GM10248 (cell line): ENCODE measurements at regions of chr20 and their contacts with region 1.

Region 1: DNA sequence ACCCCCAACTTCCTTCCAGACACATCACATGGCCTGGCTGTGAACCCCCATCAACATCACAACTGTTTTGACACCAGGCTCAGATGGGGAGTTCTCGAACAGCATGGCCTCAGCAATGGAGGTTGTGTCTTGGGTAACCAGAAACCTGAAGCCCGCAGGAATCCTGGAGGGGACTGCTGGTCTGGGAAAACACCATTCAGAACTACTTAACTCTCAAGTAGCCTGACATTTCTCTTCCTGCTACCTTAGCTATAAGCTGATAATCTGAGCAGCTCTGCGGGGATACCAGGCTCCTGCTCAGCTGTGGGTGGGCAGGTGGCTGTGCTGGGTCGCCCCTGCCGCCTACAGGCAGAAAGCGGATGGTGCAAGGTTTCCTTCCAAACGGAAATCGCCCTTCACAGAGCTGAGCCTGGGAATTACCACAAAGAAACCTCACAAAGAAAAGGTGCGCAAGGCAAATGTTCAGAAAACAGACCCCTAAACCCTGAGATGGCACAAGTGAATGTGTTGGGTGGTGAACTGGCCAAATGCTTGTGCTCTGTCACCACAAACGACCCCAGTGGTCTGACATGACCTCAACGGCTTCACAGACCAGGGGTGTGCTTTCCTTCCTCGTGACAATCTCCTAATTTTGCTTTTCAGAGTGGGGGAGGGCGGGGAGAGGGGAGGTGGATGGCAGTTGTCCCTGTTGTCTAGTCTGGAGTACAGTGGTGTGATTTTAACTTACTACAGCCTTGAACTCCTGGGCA is 29.5 kb downstream of the SNX5 start:
- DNase-seq: peak; percentile 78
- CTCF ChIP-seq: peak; percentile 92

Region 2: DNA sequence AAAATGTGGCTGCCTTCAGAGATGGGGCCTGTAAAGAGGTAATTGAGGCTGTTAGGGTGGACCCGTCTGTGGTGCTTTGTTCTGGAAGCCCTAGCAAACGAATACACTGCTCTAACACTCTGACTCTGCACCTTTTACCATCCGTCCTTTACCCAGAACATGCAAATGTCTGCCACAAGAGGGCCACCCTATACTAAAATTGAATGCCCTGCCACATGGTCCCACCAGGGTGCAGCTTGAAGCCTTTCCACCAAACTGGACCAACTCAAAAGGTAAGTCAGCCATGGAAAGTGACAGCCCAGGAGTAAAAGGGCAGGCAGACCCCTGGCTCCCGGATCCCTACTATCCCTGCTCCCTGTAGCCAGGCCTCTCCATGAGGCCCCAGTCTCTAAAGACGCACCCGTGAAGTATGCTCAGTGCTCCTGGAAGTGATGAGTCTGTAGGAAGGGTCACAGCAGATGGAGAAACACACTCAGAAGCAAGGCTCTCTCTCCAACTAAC is 402.1 kb before region 1 on chr20:
- CTCF ChIA-PET with region 1: interaction called, 11 read pairs
- POLR2A ChIA-PET with region 1: no interaction called
- DNase-seq: peak; percentile 73
- CTCF ChIP-seq: peak; percentile 81

Region 3: DNA sequence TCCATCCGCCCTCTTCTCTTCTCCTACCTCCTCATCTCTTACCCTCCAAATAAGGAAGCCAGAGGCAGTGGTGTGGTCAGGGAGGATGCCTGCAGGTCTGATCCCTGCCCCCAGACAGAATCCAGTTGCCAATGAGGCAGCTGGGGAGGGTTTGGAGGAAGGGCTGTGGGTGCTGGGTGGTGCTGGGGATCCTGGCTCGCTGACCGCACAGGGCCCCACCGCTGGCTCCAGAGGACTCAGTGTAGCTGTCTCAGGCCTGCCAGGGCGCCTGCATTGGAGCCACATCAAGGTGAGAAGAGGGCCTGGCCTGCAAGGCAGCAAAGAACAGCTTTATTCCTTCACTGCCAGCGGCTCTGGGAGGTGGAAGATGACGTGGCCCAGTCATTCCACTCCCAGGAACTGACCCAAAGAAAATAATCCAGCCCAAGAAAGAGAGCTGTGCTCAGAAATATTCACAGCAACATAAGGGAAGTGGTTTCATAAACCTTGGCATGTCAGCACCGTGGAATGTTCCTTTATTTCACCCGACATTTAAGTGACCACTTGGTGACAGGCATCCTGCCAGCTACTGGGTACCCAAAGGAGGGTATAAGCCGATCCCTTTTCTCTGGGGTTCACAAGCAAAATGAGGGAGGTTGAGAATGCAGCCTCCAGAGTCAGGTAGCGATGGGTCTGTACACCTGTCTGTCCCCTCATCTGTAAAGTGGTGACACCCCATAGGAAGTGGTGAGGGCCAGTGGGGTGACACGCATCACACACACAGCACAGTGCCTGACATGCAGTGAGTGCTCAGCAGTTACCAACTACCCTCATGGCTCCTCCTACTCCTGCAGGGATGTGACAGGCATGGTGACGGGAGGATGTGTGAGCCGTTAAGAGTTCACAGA is 95.6 kb before region 1 on chr20:
- CTCF ChIA-PET with region 1: no interaction called
- POLR2A ChIA-PET with region 1: no interaction called
- DNase-seq: no peak
- CTCF ChIP-seq: no peak

Region 4: DNA sequence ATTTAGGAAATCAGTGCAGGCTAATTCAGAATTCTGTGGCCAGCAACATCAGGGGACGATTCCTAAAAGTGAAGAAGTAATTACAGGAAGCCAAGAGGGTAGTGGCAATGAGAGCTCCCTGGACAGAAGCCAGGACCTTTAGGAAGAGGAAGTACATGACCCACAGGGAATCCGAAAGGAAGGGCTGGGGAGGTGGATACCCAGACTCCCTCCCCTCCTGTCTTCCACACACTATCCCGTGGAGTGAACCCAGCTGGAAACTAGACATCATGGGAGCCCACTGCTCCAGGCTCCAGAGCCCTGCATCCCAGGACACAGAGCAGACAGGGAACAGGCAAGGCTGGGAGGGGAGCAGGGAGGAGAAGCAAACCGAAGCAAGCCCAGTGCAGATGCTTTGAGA is 53.5 kb before region 1 on chr20:
- CTCF ChIA-PET with region 1: no interaction called
- POLR2A ChIA-PET with region 1: no interaction called
- DNase-seq: no peak
- CTCF ChIP-seq: no peak

Region 5: GRCh38 chr20:17904027-17904426 is 35.0 kb before region 1 on chr20:
- CTCF ChIA-PET with region 1: interaction called, 13 read pairs
- POLR2A ChIA-PET with region 1: no interaction called
- DNase-seq: peak; percentile 52
- CTCF ChIP-seq: no peak

Region 6: DNA sequence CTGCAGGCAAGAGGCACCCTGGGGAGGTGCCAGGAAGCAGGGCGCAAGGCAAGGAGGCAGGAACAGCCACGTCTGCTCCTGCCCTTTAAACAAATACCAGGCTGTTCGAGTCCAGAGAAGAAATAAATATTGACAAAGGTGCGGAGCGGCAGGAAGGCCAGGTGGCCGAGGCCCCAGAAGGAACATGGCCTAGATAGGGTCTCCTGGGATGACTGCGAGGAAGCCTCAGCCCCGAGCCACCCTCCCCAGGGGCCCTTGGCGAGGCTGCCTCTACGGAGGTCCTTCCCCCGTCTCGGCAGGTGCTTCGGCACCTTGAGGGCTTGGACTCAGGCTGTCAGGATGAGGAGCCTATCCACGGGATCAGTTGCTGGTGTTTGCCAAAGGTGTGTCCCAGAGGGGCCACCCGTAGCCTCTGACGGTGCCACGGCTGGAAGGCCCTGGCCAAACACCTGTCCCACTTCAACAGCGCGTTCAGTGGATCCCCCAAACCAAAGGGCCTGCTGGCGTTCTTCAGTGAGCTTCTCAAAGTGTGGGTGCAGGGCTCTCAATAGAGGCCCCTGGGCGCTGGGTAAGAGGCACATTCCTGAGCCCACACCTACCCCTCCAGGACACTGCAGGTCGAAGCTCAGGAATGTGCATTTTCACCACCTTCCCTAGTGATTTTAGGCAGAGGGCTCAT is 10.3 kb before region 1 on chr20:
- CTCF ChIA-PET with region 1: interaction called, 22 read pairs
- POLR2A ChIA-PET with region 1: no interaction called
- DNase-seq: no peak
- CTCF ChIP-seq: no peak

Region 7: DNA sequence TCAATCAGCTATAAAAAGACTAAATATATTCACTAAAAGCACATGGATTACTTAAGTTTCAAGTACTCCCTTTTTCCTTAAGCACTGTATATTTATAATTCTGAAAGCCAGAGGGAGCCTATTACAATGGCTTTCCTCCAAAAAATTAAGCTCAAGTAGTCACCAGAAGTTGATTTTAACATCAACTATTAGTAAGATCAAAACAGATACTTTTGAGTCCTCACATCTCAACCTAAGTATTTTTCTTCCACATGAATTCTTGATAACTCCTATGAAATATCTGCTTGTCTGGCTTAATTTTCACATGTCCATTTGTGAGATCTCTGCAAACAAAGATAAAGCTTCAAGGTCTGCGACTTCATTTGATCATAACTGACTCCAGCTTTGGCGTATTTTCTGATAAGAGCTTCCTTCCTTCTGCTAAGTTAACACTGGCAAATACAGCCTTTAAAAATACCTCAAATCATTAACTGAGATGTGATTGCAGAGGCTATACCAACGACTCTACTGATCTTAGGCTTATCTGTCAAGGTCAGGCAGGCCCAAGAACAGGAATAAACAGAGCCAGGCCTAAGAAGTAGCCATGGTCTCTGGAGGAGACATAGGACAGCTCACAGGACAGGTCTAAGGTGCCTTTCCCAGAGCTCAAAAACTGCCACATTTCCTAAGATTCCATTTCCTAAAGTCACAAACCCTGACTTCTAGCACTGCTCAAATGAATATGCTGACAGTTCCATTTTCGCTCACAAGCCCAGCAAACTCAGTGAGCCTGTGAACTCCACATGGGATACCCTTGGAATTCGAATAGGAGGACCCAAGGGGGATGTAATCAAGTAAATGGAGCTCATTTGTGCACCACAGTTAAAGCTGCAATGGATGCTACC is 19.6 kb after region 1 on chr20:
- CTCF ChIA-PET with region 1: interaction called, 28 read pairs
- POLR2A ChIA-PET with region 1: interaction called, 5 read pairs
- DNase-seq: no peak
- CTCF ChIP-seq: no peak